ENCODE measurements at regions of chr21 and their contacts with region 1.

Region 1: DNA sequence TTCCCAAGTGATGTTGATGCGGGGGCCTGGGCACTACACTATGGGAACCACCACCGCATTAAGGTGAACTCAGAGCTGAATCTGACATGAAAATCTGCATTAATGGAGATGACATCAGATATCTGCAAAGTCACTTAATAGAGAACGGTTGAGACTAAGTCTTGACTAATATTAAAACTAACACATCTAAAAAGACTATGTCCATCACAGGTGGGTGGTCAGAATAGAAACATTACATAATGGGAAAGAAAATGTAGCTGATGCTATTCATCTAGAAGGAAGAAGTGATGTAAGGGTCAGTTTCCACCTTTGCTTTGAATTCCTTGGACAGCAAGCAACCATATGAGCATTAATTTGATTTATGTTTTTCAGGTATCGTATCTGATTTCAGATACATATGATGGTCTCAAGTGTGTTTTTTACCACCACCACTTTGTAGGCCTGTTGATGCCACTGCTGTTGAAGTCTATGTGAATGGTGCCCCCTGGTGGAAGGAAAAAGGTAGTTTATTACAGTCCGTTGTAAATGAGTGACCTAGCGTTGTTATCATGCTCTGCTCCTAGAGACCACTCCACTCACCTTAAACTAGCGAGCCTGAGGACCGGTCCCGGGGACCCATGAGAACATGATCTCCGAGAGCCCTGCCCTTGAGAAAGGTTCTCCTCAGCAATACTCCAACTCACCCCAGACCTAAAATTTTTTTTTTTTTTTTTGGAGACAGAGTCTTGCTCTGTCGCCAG is 73.5 kb downstream of the BACH1 start:
- DNase-seq: peak; percentile 77 to 91 (median 80)
- ATAC-seq: peak; percentile 95
- H3K4me3 ChIP-seq: no peak overlapping the region
- H3K27ac ChIP-seq: no peak overlapping the region
- H3K4me1 ChIP-seq: peaks cover 0 to 3% of the 10 kb centered on the region in 2 experiments; a peak in 2 of 5 replicates
- H3K27me3 ChIP-seq: no peaks in the 10 kb centered on the region
- CTCF ChIP-seq: peak; percentile 81 to 93 (median 83)
- EP300 ChIP-seq: no peak
- POLR2A ChIP-seq: no peak
- RAD21 ChIP-seq: peak; percentile 96 to 98

Region 2: DNA sequence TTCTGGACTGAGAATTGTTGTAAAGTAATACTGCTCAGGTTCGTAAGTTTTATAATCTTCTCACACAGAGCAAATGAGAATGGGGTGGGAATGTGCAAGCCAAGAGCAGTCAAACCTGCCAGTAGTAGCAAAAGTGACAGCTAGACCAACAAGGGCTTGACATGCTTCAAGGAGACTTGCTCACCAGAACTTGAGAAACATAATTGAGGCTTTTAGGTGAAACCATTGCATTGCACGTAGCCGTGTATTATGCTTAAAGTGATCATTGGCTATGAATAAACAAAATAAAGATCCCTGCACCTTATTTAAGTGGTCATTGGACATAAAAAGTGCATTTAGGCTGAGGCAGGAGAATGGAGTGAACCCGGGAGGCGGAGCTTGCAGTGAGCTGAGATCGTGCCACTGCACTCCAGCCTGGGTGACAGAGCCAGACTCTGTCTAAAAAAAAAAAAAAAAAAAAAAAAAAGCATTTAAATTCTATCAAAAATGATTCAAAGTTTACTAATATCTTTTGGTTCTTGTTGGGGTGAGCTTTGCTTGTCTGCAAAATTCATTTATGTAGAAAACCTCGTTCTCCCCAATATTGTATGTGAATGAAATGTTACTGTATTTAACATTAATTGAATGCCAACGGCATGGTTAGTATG is 287.0 kb before region 1 on chr21:
- CTCF ChIA-PET with region 1: interaction called, 20 read pairs
- POLR2A ChIA-PET with region 1: interaction called, 3 read pairs
- in situ Hi-C with region 1: loop called (anchors 5 kb)
- intact Hi-C with region 1: loop called (anchors 1 kb)
- DNase-seq: no peak
- ATAC-seq: peak; percentile 20; the same call in 1 of the 3 replicates
- H3K4me3 ChIP-seq: no peak overlapping the region
- H3K27ac ChIP-seq: no peak overlapping the region
- H3K4me1 ChIP-seq: peaks cover 0 to 3% of the 10 kb centered on the region in 2 experiments; a peak in 2 of 5 replicates
- H3K27me3 ChIP-seq: peaks cover 4 to 10% of the 10 kb centered on the region in 2 experiments; a peak in 4 of 5 replicates
- CTCF ChIP-seq: no peak
- EP300 ChIP-seq: no peak
- POLR2A ChIP-seq: no peak
- RAD21 ChIP-seq: no peak

Region 3: DNA sequence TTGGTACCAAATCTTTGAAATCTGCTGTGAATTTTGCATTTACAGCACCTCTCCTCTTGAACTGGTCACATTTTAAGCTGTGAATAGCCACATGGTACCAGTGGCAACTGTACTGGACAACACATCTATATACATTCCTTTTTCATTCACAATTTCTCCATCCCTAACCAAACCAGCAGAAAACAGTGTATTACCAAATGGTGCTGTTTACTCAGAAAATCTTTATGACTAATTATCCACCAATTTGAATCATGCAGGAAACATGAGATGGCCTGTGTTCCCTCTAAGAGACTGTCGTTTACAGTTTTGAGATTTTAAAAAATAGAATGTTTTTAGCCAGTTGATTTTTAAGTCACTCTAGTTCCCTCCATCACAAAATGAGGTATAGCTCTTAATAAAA is 281.2 kb before region 1 on chr21:
- CTCF ChIA-PET with region 1: interaction called, 20 read pairs
- POLR2A ChIA-PET with region 1: interaction called, 3 read pairs
- in situ Hi-C with region 1: loop called (anchors 5 kb)
- intact Hi-C with region 1: loop called (anchors 1 kb)
- DNase-seq: no peak
- ATAC-seq: no peak
- H3K4me3 ChIP-seq: no peak overlapping the region
- H3K27ac ChIP-seq: no peak overlapping the region
- H3K4me1 ChIP-seq: no peaks in the 10 kb centered on the region
- H3K27me3 ChIP-seq: peaks cover 5 to 6% of the 10 kb centered on the region in 2 experiments; a peak in 3 of 5 replicates
- CTCF ChIP-seq: no peak
- EP300 ChIP-seq: no peak
- POLR2A ChIP-seq: no peak
- RAD21 ChIP-seq: no peak

Region 4: GRCh38 chr21:29164325-29164942 is 207.8 kb before region 1 on chr21:
- CTCF ChIA-PET with region 1: interaction called, 17 read pairs
- POLR2A ChIA-PET with region 1: no interaction called
- in situ Hi-C with region 1: no loop called
- intact Hi-C with region 1: loop called (anchors 1 kb)
- DNase-seq: peak in 2 of 4 experiments; percentile 50 to 72
- ATAC-seq: peak; percentile 87
- H3K4me3 ChIP-seq: no peak overlapping the region
- H3K27ac ChIP-seq: no peak overlapping the region
- H3K4me1 ChIP-seq: no peaks in the 10 kb centered on the region
- H3K27me3 ChIP-seq: peaks cover 0 to 8% of the 10 kb centered on the region in 2 experiments; a peak in 3 of 5 replicates
- CTCF ChIP-seq: peak; percentile 63 to 86 (median 67)
- EP300 ChIP-seq: 0 out of 2 replicates have a peak, but pooled peaks have one; percentile 12
- POLR2A ChIP-seq: no peak
- RAD21 ChIP-seq: peak; percentile 94 to 96

Region 5: DNA sequence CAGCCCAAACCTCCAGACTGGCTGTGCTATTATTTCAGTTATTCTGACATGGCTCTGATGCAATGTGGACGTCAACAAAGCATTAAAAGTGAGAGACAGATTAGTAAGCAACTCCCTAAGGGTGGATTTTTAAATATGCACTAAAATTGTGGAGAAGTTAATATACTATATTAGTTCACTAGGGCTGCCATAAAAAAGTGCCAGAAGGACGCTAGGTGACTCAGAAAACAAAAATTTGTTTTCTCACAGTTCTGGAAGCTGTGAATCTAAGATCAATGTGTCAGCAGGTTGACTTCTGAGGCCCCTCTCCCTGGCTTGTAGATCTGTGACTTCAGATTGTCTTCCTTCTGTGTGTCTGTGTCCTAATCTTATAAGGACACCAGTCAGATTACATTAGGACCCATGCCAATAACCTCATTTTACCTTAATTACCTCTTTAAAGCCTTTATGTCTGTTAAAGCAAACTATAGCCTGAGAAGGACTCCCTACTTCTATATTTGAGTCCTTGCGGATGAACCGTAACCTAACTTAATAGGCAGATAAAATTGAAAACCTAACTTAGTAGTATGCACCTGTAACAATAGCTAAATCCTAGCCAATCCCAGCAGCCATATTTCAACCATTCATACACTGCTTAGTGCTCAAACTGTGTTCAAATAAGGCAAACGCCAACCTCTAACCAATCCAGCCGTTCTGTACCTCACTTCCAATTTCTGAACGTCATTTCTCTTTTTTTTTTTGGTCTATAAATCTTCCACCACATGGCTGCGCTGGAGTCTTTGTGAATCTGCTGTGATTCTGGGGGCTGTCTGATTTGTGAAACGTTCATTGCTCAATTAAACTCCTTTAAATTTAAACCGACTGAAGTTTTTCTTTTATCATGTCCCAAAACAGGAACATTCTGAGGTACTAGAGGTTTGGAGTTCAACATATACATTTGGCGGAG is 139.4 kb before region 1 on chr21:
- CTCF ChIA-PET with region 1: interaction called, 3 read pairs
- POLR2A ChIA-PET with region 1: no interaction called
- in situ Hi-C with region 1: no loop called
- intact Hi-C with region 1: loop called (anchors 2 kb)
- DNase-seq: peak in 2 of 4 experiments; percentile 18 to 38
- ATAC-seq: peak; percentile 72
- H3K4me3 ChIP-seq: no peak overlapping the region
- H3K27ac ChIP-seq: no peak overlapping the region
- H3K4me1 ChIP-seq: peaks cover 0 to 9% of the 10 kb centered on the region in 2 experiments; a peak in 3 of 5 replicates
- H3K27me3 ChIP-seq: peaks cover 14 to 19% of the 10 kb centered on the region in 2 experiments
- CTCF ChIP-seq: peak; percentile 15 to 53 (median 22); a peak in 3 of 6 replicates
- EP300 ChIP-seq: peak; percentile 67; the same call in 1 of the 2 replicates
- POLR2A ChIP-seq: no peak
- RAD21 ChIP-seq: peak; percentile 56 to 58

Region 6: GRCh38 chr21:29265690-29266479 is 106.3 kb before region 1 on chr21:
- CTCF ChIA-PET with region 1: interaction called, 3 read pairs
- POLR2A ChIA-PET with region 1: no interaction called
- in situ Hi-C with region 1: no loop called
- intact Hi-C with region 1: loop called (anchors 10 kb)
- DNase-seq: no peak
- ATAC-seq: no peak; the same call in 2 of the 3 replicates
- H3K4me3 ChIP-seq: no peak overlapping the region
- H3K27ac ChIP-seq: no peak overlapping the region
- H3K4me1 ChIP-seq: no peaks in the 10 kb centered on the region
- H3K27me3 ChIP-seq: no peaks in the 10 kb centered on the region
- CTCF ChIP-seq: no peak
- EP300 ChIP-seq: no peak
- POLR2A ChIP-seq: no peak
- RAD21 ChIP-seq: no peak

Measured in K562 (cell line).